Transverse colon (tissue), 4 donors: ENCODE measurements at regions of chr11 and their contacts with region 1.

Region 1: DNA sequence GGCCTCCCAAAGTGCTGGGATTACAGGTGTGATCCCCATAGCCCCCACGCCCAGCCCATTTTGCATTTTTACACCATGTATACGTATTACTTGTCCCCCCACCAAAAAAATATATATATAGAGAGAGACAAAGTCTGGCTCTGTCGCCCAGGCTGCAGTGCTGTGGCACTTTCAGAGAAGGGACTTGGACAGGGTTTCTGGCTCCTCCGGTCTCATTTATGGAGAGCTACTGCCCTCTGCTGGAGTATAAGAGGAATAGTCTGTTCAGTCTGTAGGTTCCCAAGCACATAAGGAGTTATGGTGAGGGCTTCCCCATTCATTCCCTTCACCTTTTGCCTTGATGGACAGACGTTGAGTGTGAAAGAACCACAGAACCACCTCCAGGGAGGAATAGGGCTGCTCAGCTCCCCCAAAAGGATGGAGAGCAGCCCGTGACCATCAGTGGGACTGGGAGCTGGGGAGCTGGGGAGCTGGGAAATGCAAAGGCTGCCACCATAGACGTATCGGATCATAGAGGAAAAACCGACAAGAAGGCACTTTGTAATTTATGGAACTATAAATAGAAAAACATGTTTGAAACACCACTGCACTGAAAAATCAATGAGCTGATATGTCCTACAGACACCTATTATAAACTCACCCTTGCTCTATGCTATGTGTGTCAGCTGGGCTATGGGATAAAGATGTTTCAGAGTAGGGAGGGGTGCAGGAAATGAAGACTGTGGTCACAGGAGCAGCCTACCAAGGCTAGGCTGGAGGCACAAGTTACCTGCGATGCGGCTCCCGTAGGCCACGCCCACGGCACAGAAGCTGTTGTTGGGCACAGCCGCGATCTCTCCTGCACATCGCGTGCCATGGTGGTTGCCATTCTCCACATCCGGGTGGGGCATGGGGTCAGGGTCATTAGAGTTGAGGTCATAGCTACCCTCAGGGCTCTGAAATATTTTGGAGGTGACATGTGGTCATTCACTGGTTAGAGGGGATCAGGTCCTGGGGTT is 5.2 kb downstream of the PCSK7 start:
- DNase-seq: peak; percentile 54
- H3K4me3 ChIP-seq: no peak overlapping the region
- H3K27ac ChIP-seq: peak overlapping the region; percentile 83 to 91 (median 86)
- H3K4me1 ChIP-seq: peaks cover 27 to 71% (median 58%) of the 10 kb centered on the region in 4 donors
- H3K27me3 ChIP-seq: no peaks in the 10 kb centered on the region
- CTCF ChIP-seq: peak; percentile 76 to 91 (median 81)
- EP300 ChIP-seq: no peak
- POLR2A ChIP-seq: no peak

Region 2: DNA sequence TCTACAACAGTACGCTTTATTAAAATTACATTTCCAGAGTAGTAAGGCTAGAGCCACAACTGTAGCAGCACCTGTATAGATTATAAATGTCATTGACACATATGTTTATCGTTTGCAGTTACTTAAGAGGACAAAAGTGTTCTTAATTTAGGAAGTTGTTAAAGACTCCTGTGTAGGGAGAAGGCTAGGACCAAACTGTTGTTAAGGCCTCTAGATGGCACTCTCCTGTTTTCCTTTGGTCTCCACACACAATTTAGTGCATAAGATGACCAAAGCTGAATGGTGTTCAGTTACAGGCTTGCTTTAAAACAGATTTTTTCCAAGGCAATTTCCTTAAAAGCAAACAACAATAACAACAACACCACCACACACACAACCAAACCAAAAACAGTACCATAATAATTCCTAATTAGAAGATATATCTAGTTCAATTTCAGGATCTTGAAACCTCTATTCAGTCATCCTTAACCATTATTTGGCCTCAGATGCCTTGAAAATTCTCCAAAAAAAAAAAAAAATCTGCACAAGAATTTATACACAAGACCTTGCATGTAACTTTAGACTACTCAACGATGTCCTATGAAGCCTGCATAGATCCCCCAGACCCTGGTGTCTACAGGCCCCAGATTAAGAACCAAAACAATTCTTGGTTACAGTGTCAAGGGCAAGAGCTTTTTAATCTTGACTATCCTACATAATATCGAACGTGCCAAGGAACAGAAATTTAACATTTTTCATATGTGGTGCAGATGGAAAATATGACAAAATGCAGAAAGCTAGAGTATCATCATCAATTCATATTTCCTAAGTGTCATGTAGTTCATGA is 346.7 kb before region 1 on chr11:
- in situ Hi-C with region 1: no loop called
- intact Hi-C with region 1: loop called (anchors 10 kb)
- DNase-seq: no peak
- H3K4me3 ChIP-seq: no peak overlapping the region
- H3K27ac ChIP-seq: no peak overlapping the region
- H3K4me1 ChIP-seq: peaks cover 0 to 5% (median 0%) of the 10 kb centered on the region in 4 donors
- H3K27me3 ChIP-seq: no peaks in the 10 kb centered on the region
- CTCF ChIP-seq: peak; percentile 56 to 61 (median 60)
- EP300 ChIP-seq: no peak
- POLR2A ChIP-seq: no peak

Region 3: DNA sequence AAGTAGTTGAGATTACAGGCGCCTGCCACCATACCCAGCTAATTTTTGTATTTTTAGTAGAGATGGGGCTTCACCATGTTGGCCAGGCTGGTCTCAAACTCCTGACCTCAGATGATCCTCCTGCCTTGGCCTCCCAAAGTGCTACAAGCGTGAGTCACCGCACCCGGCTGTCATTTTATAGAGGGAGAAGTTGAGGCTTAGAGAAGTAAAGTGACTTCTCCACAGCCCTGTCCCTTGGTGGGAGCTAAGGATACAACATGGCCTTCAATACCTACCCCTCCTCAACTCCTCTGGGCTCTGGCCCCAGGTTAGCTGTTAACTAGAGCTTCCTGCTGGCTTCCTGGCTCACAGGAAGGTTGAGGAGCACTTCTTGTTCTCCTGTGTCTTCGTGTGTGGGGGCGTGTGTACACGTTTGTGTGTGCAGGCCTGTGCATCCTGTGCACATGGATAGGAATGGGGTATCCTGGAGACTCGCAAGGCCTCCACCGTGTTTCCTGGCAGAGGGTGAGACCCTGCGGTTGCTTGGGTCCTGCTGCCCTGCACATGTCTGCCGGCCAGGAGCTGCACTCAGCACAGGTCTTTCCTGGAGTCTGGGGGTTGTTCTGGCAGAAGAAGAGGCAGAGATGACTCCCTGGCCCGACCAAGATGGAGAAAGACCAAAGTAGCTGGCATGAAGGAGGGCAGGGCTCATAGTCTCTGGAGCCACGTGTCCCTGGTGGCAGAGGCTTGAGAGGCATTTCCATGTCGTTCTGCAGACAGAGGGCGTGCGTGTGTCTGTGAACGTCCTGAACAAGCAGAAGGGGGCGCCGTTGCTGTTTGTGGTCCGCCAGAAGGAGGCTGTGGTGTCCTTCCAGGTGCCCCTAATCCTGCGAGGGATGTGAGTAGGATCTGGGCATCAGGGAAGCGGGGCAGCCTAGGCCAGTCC is 45.8 kb before region 1 on chr11:
- in situ Hi-C with region 1: loop called in 1 of 4 experiments (anchors 5 kb)
- intact Hi-C with region 1: loop called (anchors 5 kb)
- DNase-seq: peak; percentile 87
- H3K4me3 ChIP-seq: peak overlapping the region in 1 of 4 donors; percentile 83
- H3K27ac ChIP-seq: peak overlapping the region; percentile 42 to 98 (median 98)
- H3K4me1 ChIP-seq: peaks cover 12 to 37% (median 29%) of the 10 kb centered on the region in 4 donors
- H3K27me3 ChIP-seq: no peaks in the 10 kb centered on the region
- CTCF ChIP-seq: peak; percentile 58 to 94 (median 73)
- EP300 ChIP-seq: no peak
- POLR2A ChIP-seq: no peak

Region 4: GRCh38 chr11:117197516-117198456 is 28.9 kb before region 1 on chr11:
- in situ Hi-C with region 1: no loop called
- intact Hi-C with region 1: loop called (anchors 1 kb)
- DNase-seq: peak; percentile 71
- H3K4me3 ChIP-seq: peak overlapping the region in 3 of 4 donors; percentile 8 to 47 (median 43)
- H3K27ac ChIP-seq: peak overlapping the region; percentile 84 to 96 (median 88)
- H3K4me1 ChIP-seq: peaks cover 11 to 38% (median 25%) of the 10 kb centered on the region in 4 donors
- H3K27me3 ChIP-seq: no peaks in the 10 kb centered on the region
- CTCF ChIP-seq: peak; percentile 54 to 83 (median 70)
- EP300 ChIP-seq: no peak
- POLR2A ChIP-seq: peak; percentile 32

Region 5: GRCh38 chr11:118380571-118380970 is 1153.9 kb after region 1 on chr11:
- in situ Hi-C with region 1: no loop called
- intact Hi-C with region 1: no loop called
- DNase-seq: no peak
- H3K4me3 ChIP-seq: no peak overlapping the region
- H3K27ac ChIP-seq: no peak overlapping the region
- H3K4me1 ChIP-seq: no peaks in the 10 kb centered on the region
- H3K27me3 ChIP-seq: no peaks in the 10 kb centered on the region
- CTCF ChIP-seq: no peak
- EP300 ChIP-seq: no peak
- POLR2A ChIP-seq: no peak